ENCODE measurements at regions of chr1 and their contacts with region 1.

Region 1: DNA sequence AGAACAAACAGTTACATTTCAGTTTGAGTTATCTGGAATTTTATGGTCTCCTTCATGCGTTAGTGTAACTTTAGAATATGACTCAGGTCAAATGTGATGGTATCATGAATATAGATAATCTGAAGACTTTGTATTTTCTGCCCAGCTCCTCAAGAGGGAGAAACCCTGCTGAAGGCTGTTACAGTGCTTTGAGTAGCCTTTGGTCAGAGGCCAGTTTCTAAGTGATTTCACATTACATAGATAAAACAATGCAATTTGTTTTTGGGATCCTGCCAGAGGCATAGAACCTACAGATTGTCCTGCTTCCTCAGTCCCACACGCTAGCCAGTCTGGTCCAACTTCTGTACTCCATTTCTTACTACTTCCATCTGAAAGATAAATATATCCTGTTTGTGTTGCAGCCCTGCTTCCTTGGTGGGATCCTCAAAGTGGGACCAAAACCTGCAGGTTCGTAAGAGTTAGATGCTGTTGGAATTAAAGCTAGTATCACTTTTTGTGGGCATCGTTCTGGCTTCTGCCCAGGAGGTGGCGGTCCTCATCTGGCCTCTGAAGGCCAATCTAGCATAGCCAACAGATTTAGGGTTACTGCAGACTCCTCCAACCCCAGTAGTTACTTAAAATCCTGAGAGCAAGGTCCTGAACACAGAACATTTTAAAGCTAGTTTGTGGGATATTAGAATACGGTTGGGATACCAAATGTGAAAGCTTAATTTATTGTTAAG is 645.8 kb upstream of the USP24 start:
- DNase-seq: no peak
- ATAC-seq: no peak
- H3K4me3 ChIP-seq: no peak overlapping the region
- H3K4me3 Mint-ChIP-seq: no peak overlapping the region
- H3K27ac ChIP-seq: no peak overlapping the region
- H3K27ac Mint-ChIP-seq: no peak overlapping the region
- H3K4me1 ChIP-seq: no peaks in the 10 kb centered on the region
- H3K4me1 Mint-ChIP-seq: no peaks in the 10 kb centered on the region
- H3K27me3 ChIP-seq: no peaks in the 10 kb centered on the region
- H3K27me3 Mint-ChIP-seq: peaks cover 0 to 12% (median 0%) of the 10 kb centered on the region in 5 donors

Region 2: DNA sequence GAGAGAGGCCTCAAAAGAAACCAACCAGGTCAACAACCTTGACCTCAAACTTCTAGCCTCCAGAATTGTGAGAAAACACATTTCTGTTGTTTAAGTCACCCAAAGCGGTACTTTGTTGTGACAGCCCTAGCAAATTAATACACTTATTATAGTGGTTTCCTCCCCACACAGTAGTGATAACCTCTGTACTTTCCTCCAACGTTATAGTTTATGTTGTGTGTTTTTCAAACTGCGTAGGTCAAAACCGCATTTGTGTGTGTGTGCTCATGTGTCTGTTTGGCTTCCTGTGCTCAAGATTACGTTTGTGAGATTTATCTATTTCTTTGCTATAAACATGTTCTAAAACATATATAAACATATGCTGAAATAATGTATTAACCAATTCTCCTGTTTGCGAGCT is 22.0 kb after region 1 on chr1:
- CTCF ChIA-PET with region 1: no interaction called
- POLR2A ChIA-PET with region 1: no interaction called
- intact Hi-C with region 1: loop called in 1 of 2 experiments (anchors 1 kb)
- DNase-seq: no peak
- ATAC-seq: no peak
- H3K4me3 ChIP-seq: no peak overlapping the region
- H3K4me3 Mint-ChIP-seq: no peak overlapping the region
- H3K27ac ChIP-seq: no peak overlapping the region
- H3K27ac Mint-ChIP-seq: no peak overlapping the region
- H3K4me1 ChIP-seq: no peaks in the 10 kb centered on the region
- H3K4me1 Mint-ChIP-seq: no peaks in the 10 kb centered on the region
- H3K27me3 ChIP-seq: no peaks in the 10 kb centered on the region
- H3K27me3 Mint-ChIP-seq: peaks cover 0 to 11% (median 0%) of the 10 kb centered on the region in 5 donors

Region 3: GRCh38 chr1:56095696-56096665 is 235.0 kb after region 1 on chr1:
- CTCF ChIA-PET with region 1: no interaction called
- POLR2A ChIA-PET with region 1: no interaction called
- intact Hi-C with region 1: no loop called
- DNase-seq: no peak
- ATAC-seq: no peak
- H3K4me3 ChIP-seq: no peak overlapping the region
- H3K4me3 Mint-ChIP-seq: no peak overlapping the region
- H3K27ac ChIP-seq: no peak overlapping the region
- H3K27ac Mint-ChIP-seq: no peak overlapping the region
- H3K4me1 ChIP-seq: no peaks in the 10 kb centered on the region
- H3K4me1 Mint-ChIP-seq: no peaks in the 10 kb centered on the region
- H3K27me3 ChIP-seq: no peaks in the 10 kb centered on the region
- H3K27me3 Mint-ChIP-seq: no peaks in the 10 kb centered on the region

Measured in naive thymus-derived CD4-positive, alpha-beta T cell (primary cell).